ENCODE measurements at regions of chr3 and their contacts with region 1.

Region 1: GRCh38 chr3:25594007-25594502 is 70.7 kb downstream of the TOP2B start:
- DNase-seq: peak; percentile 12
- ATAC-seq: peak; percentile 56
- H3K4me3 Mint-ChIP-seq: no peak overlapping the region
- H3K27ac Mint-ChIP-seq: no peak overlapping the region
- H3K4me1 Mint-ChIP-seq: peaks cover 2% of the 10 kb centered on the region
- H3K27me3 Mint-ChIP-seq: no peaks in the 10 kb centered on the region

Region 2: GRCh38 chr3:24680214-24680967 is 913.7 kb before region 1 on chr3:
- CTCF ChIA-PET with region 1: interaction called, 6 read pairs
- POLR2A ChIA-PET with region 1: no interaction called
- intact Hi-C with region 1: loop called in 1 of 2 experiments (anchors 2 kb)
- DNase-seq: peak; percentile 79
- ATAC-seq: peak; percentile 69
- H3K4me3 Mint-ChIP-seq: no peak overlapping the region
- H3K27ac Mint-ChIP-seq: no peak overlapping the region
- H3K4me1 Mint-ChIP-seq: peaks cover 10% of the 10 kb centered on the region
- H3K27me3 Mint-ChIP-seq: peaks cover 60% of the 10 kb centered on the region

Region 3: GRCh38 chr3:24773798-24774197 is 820.3 kb before region 1 on chr3:
- CTCF ChIA-PET with region 1: no interaction called
- POLR2A ChIA-PET with region 1: no interaction called
- intact Hi-C with region 1: loop called in 1 of 2 experiments (anchors 1 kb)
- DNase-seq: peak; percentile 61
- ATAC-seq: no peak
- H3K4me3 Mint-ChIP-seq: no peak overlapping the region
- H3K27ac Mint-ChIP-seq: no peak overlapping the region
- H3K4me1 Mint-ChIP-seq: no peaks in the 10 kb centered on the region
- H3K27me3 Mint-ChIP-seq: no peaks in the 10 kb centered on the region

Region 4: GRCh38 chr3:25532431-25533162 is 61.5 kb before region 1 on chr3:
- CTCF ChIA-PET with region 1: interaction called, 11 read pairs
- POLR2A ChIA-PET with region 1: no interaction called
- intact Hi-C with region 1: loop called (anchors 2 to 5 kb)
- DNase-seq: peak; percentile 67
- ATAC-seq: peak; percentile 33
- H3K4me3 Mint-ChIP-seq: no peak overlapping the region
- H3K27ac Mint-ChIP-seq: no peak overlapping the region
- H3K4me1 Mint-ChIP-seq: no peaks in the 10 kb centered on the region
- H3K27me3 Mint-ChIP-seq: peaks cover 4% of the 10 kb centered on the region

Region 5: GRCh38 chr3:25604107-25604805 is 10.2 kb after region 1 on chr3:
- CTCF ChIA-PET with region 1: interaction called, 10 read pairs
- POLR2A ChIA-PET with region 1: no interaction called
- intact Hi-C with region 1: no loop called
- DNase-seq: no peak
- ATAC-seq: peak; percentile 90
- H3K4me3 Mint-ChIP-seq: no peak overlapping the region
- H3K27ac Mint-ChIP-seq: no peak overlapping the region
- H3K4me1 Mint-ChIP-seq: peaks cover 3% of the 10 kb centered on the region
- H3K27me3 Mint-ChIP-seq: no peaks in the 10 kb centered on the region